ENCODE measurements at regions of chr1 and their contacts with region 1.

Region 1: DNA sequence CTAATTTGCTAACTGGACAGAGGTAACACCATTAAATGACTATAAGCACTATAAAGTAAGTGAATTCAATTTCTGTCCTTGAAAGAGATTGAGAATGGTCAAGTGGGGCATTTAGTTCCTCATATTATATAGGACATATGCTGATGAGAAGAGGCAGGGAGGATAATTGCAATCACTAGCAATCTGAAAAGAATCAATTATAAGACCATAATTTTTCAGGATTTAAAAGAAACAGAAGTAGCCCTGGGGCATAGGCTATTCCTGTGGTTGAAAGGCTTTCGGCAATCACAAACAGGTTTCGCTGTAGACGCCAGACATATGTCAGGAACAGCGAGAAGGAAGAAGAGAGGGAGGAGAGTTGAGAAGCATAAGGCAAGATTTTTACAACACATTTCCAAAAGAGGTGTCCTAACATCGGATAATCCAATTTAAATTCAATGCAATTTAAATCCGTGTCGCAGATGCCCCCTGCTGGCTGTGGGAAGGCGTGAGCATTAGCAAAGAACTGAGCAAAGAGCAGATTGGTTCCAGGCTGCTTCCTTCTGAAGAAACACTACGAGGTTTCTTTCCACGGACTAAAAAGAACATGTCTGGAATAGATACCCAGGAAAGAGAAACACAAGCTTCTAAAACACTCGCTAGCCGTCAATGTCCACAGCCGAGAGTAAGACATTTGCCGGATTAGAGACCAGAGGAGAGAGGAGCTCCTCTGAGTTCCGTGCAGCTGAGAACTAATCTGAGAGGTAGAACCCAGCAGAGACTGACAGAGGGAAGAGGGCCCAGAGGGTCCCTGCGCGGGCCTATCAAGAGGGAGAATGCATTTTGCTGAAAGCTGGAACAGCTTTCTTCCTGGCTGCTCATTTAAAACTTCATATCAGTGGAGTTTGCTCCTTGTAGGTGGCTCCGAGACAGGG is 27.9 kb downstream of the RGS5 start:
- DNase-seq: peak; percentile 66 to 83
- H3K4me3 ChIP-seq: peak overlapping the region in 2 of 4 donors; percentile 20 to 29
- H3K27ac ChIP-seq: peak overlapping the region in 3 of 5 donors; percentile 55 to 70 (median 60)
- H3K4me1 ChIP-seq: peaks cover 7 to 42% (median 21%) of the 10 kb centered on the region in 4 donors
- H3K27me3 ChIP-seq: no peaks in the 10 kb centered on the region
- CTCF ChIP-seq: peak in 5 of 7 experiments; percentile 66 to 89 (median 82)
- EP300 ChIP-seq: no peak
- POLR2A ChIP-seq: no peak

Region 2: GRCh38 chr1:162854245-162854882 is 320.4 kb before region 1 on chr1:
- intact Hi-C with region 1: loop called (anchors 10 kb)
- DNase-seq: peak; percentile 76 to 88
- H3K4me3 ChIP-seq: no peak overlapping the region
- H3K27ac ChIP-seq: no peak overlapping the region
- H3K4me1 ChIP-seq: peaks cover 0 to 3% (median 0%) of the 10 kb centered on the region in 4 donors
- H3K27me3 ChIP-seq: no peaks in the 10 kb centered on the region
- CTCF ChIP-seq: peak in 5 of 7 experiments; percentile 55 to 76 (median 64)
- EP300 ChIP-seq: no peak
- POLR2A ChIP-seq: no peak

Region 3: DNA sequence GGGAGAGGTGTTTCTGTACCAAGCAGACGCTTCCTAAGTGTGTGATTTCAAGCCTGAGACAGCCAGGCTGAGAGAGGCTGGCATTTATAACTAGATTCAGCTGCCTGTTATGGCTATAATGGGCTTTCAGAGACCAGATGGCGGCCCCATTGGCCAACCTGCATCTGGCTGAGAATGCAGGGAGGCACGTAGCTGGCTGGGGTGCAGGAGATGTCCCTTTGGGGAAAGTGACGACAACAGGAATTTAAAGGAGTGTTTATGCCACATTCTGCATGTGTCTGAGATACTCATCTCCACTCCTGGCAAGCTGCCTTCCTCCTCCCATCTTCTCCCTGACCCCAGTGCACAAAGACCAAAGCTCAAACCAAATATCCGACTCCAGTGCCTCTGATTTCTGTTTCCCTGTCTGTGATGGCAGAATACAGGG is 292.5 kb before region 1 on chr1:
- intact Hi-C with region 1: loop called (anchors 10 kb)
- DNase-seq: peak in 1 of 2 donors; percentile 30
- H3K4me3 ChIP-seq: no peak overlapping the region
- H3K27ac ChIP-seq: no peak overlapping the region
- H3K4me1 ChIP-seq: no peaks in the 10 kb centered on the region
- H3K27me3 ChIP-seq: no peaks in the 10 kb centered on the region
- CTCF ChIP-seq: no peak
- EP300 ChIP-seq: no peak
- POLR2A ChIP-seq: no peak

Region 4: DNA sequence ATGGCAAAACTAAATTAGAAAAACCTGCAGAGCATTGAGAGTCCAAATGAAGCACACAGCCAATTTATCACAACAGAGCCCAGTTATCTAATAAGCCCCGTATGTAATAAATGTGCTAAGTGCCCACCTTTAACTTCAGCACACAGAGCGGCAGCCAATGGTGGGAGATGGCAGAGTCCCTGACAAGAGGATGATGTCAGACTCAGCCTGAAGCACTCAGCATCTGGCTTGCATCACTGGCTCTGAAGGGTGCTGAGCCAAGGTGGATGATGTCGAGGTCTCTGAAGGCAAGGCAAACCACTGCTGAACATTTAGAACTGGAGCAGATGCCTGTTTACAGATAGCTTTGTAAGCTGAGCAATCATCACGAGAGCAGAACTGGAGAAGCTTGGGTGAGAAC is 265.3 kb after region 1 on chr1:
- intact Hi-C with region 1: no loop called
- DNase-seq: peak in 1 of 2 donors; percentile 78
- H3K4me3 ChIP-seq: no peak overlapping the region
- H3K27ac ChIP-seq: no peak overlapping the region
- H3K4me1 ChIP-seq: no peaks in the 10 kb centered on the region
- H3K27me3 ChIP-seq: peaks cover 0 to 4% (median 0%) of the 10 kb centered on the region in 3 donors
- CTCF ChIP-seq: no peak
- EP300 ChIP-seq: no peak
- POLR2A ChIP-seq: no peak